ENCODE measurements at regions of chr14 and their contacts with region 1.

Region 1: GRCh38 chr14:94689218-94689984 is 77.2 kb downstream of the SERPINA3 start:
- DNase-seq: peak; percentile 83
- H3K4me3 ChIP-seq: peak overlapping the region in 2 of 8 donors; percentile 17 to 34
- H3K27ac ChIP-seq: no peak overlapping the region
- H3K4me1 ChIP-seq: peaks cover 0 to 13% (median 8%) of the 10 kb centered on the region in 6 donors
- H3K27me3 ChIP-seq: peaks cover 0 to 30% (median 5%) of the 10 kb centered on the region in 7 donors
- CTCF ChIP-seq: peak; percentile 25 to 91 (median 84)
- POLR2A ChIP-seq: no peak

Region 2: GRCh38 chr14:94816113-94816512 is 126.7 kb after region 1 on chr14:
- intact Hi-C with region 1: no loop called
- DNase-seq: no peak
- H3K4me3 ChIP-seq: no peak overlapping the region
- H3K27ac ChIP-seq: no peak overlapping the region
- H3K4me1 ChIP-seq: no peaks in the 10 kb centered on the region
- H3K27me3 ChIP-seq: peaks cover 0 to 46% (median 0%) of the 10 kb centered on the region in 7 donors
- CTCF ChIP-seq: no peak
- POLR2A ChIP-seq: no peak

Region 3: DNA sequence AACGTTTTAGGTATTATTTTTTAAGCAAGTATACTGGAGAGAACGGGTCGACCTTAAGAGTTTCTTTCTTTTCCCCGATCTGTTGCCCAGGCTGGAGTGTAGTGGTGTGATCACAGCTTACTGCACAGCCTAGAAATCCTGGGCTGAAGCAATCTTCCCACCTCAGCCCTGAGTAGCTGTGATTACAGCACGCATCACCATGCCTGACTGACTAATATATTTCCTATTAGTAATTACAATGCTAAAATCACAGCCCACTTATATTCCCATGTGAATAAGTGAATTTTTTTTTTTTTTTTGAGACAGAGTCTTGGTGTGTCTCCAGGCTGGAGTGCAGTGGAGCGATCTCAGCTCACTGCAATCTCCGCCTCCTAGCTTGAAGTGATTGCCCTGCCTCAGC is 417.6 kb after region 1 on chr14:
- intact Hi-C with region 1: loop called (anchors 10 kb)
- DNase-seq: no peak
- H3K4me3 ChIP-seq: no peak overlapping the region
- H3K27ac ChIP-seq: no peak overlapping the region
- H3K4me1 ChIP-seq: no peaks in the 10 kb centered on the region
- H3K27me3 ChIP-seq: no peaks in the 10 kb centered on the region
- CTCF ChIP-seq: no peak
- POLR2A ChIP-seq: no peak